Gastrocnemius medialis (tissue), 4 donors: ENCODE measurements at regions of chr10 and their contacts with region 1.

Region 1: GRCh38 chr10:101353692-101354327 is at the start of gene BTRC:
- DNase-seq: peak; percentile 97 to 98
- ATAC-seq: peak; percentile 97 to 98
- H3K4me3 ChIP-seq: peak within 1 kb of the TSS; percentile 87 to 98 (median 94)
- H3K27ac ChIP-seq: peak within 1 kb of the TSS; percentile 82 to 96 (median 90)
- H3K4me1 ChIP-seq: peaks cover 18 to 29% of the 10 kb centered on the region in 2 donors
- H3K27me3 ChIP-seq: no peaks in the 10 kb centered on the region
- CTCF ChIP-seq: no peak
- POLR2A ChIP-seq: peak; percentile 69 to 78
- total RNA-seq, gene BTRC: 8.7 to 17.3 (median 12.6) TPM

Region 2: GRCh38 chr10:101165736-101166135 is 188.1 kb before region 1 on chr10:
- in situ Hi-C with region 1: no loop called
- intact Hi-C with region 1: no loop called
- DNase-seq: no peak
- ATAC-seq: no peak
- H3K4me3 ChIP-seq: no peak overlapping the region
- H3K27ac ChIP-seq: no peak overlapping the region
- H3K4me1 ChIP-seq: peaks cover 0 to 3% of the 10 kb centered on the region in 2 donors
- H3K27me3 ChIP-seq: peaks cover 20 to 31% (median 31%) of the 10 kb centered on the region in 3 donors
- CTCF ChIP-seq: no peak
- POLR2A ChIP-seq: no peak

Region 3: DNA sequence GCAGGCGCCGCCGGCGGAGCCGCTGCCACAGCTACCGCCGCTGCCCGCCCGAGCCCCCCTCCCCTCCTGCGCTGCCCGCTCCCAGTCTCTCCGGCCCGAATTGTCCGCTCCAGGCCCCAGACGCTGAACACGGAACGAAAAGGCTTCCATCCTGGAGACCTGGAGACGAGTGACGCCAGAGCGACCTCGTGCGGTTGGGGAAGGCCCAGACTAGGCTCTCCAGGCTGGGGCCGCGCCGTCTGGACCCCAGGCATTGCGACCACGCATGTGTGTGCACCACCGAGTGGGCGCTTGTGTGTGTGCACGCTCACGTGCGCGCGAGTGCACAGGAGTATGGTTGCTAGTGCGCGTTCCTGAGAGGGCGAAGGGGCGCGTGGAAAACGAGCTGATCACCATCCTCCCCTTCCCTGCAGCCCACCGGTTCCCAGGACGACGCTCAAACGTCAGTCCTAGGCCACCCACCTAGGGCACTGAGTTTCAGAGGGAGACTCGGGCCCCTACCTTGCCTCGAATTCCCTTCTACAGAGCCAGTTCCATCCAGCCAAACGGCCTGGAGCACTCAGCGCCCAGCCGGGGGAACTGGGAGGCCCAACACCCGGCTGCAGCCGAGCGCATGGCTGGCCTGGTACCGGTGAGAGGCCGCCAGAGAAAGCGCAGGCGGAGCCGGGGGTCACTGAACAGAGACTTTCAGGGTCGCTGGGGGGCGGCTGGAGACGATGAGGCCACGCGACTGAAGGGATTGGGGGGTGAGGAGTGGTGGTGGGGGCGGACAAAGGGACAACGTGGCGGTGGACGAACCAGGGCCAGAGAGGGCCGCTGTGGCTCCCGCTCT is 136.1 kb before region 1 on chr10:
- in situ Hi-C with region 1: no loop called
- intact Hi-C with region 1: no loop called
- DNase-seq: no peak
- ATAC-seq: no peak
- H3K4me3 ChIP-seq: no peak overlapping the region
- H3K27ac ChIP-seq: no peak overlapping the region
- H3K4me1 ChIP-seq: peaks cover 9 to 10% of the 10 kb centered on the region in 2 donors
- H3K27me3 ChIP-seq: peaks cover 13 to 47% (median 19%) of the 10 kb centered on the region in 3 donors
- CTCF ChIP-seq: peak in 1 of 5 experiments; percentile 24
- POLR2A ChIP-seq: no peak

Region 4: GRCh38 chr10:101458869-101459268 is 105.1 kb after region 1 on chr10:
- in situ Hi-C with region 1: no loop called
- intact Hi-C with region 1: loop called (anchors 5 kb)
- DNase-seq: no peak
- ATAC-seq: peak; percentile 56 to 77
- H3K4me3 ChIP-seq: no peak overlapping the region
- H3K27ac ChIP-seq: no peak overlapping the region
- H3K4me1 ChIP-seq: peaks cover 0 to 11% of the 10 kb centered on the region in 2 donors
- H3K27me3 ChIP-seq: no peaks in the 10 kb centered on the region
- CTCF ChIP-seq: no peak
- POLR2A ChIP-seq: no peak